ENCODE measurements at regions of chr19 and their contacts with region 1.

Region 1: GRCh38 chr19:48558018-48558684 is 6.2 kb downstream of the SULT2B1 start:
- DNase-seq: no peak
- H3K4me3 ChIP-seq: no peak overlapping the region
- H3K4me3 Mint-ChIP-seq: no peak overlapping the region
- H3K27ac ChIP-seq: no peak overlapping the region
- H3K27ac Mint-ChIP-seq: no peak overlapping the region
- H3K4me1 ChIP-seq: no peaks in the 10 kb centered on the region
- H3K4me1 Mint-ChIP-seq: no peaks in the 10 kb centered on the region
- H3K27me3 ChIP-seq: no peaks in the 10 kb centered on the region
- H3K27me3 Mint-ChIP-seq: peaks cover 12 to 22% of the 10 kb centered on the region in 2 donors

Region 2: GRCh38 chr19:48543121-48544056 is 14.8 kb before region 1 on chr19:
- CTCF ChIA-PET with region 1: no interaction called
- POLR2A ChIA-PET with region 1: no interaction called
- DNase-seq: no peak
- H3K4me3 ChIP-seq: no peak overlapping the region
- H3K4me3 Mint-ChIP-seq: no peak overlapping the region
- H3K27ac ChIP-seq: no peak overlapping the region
- H3K27ac Mint-ChIP-seq: no peak overlapping the region
- H3K4me1 ChIP-seq: no peaks in the 10 kb centered on the region
- H3K4me1 Mint-ChIP-seq: no peaks in the 10 kb centered on the region
- H3K27me3 ChIP-seq: no peaks in the 10 kb centered on the region
- H3K27me3 Mint-ChIP-seq: peaks cover 4% of the 10 kb centered on the region in 2 donors

Region 3: DNA sequence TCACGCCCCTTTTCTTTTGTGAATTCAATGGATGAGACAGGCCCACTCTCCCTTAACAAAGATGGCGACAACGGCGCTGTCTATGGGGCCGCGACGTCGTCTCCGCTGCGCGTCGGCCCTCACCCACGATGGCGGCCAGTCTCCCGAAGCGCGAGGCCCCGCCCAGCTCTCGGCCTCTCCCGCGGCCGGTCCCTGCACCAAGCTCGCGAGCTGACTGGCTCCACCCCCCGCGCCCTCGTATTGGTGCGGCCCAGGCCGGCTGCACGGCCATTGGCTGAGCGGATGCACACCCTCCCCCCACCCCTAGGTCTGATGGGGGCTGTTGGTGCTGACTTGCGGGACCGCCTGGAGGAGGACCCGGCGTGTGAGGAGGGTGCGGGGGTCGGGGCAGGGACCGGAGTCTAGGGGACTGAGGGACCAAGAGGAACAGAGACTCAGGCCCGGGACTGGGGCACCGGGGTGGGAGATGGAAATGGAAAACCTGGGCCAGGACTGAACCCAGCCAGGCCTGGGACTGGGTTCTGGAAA is 66.0 kb after region 1 on chr19:
- CTCF ChIA-PET with region 1: no interaction called
- POLR2A ChIA-PET with region 1: interaction called, 11 read pairs
- DNase-seq: peak; percentile 88 to 94 (median 92)
- H3K4me3 ChIP-seq: peak overlapping the region; percentile 37
- H3K4me3 Mint-ChIP-seq: peak overlapping the region; percentile 55 to 92 (median 80)
- H3K27ac ChIP-seq: peak overlapping the region; percentile 54
- H3K27ac Mint-ChIP-seq: peak overlapping the region; percentile 82 to 97 (median 94)
- H3K4me1 ChIP-seq: peaks cover 20% of the 10 kb centered on the region
- H3K4me1 Mint-ChIP-seq: peaks cover 41 to 53% (median 49%) of the 10 kb centered on the region in 3 donors
- H3K27me3 ChIP-seq: no peaks in the 10 kb centered on the region
- H3K27me3 Mint-ChIP-seq: peaks cover 0 to 2% of the 10 kb centered on the region in 2 donors

Measured in CD8-positive, alpha-beta memory T cell (primary cell).